ENCODE measurements at regions of chr19 and their contacts with region 1.

Region 1: GRCh38 chr19:46728693-46729676 is 12.1 kb upstream of the PRKD2 start:
- DNase-seq: peak; percentile 86 to 87 (median 86)
- ATAC-seq: peak; percentile 91
- H3K4me3 ChIP-seq: no peak overlapping the region
- H3K27ac ChIP-seq: no peak overlapping the region; the same call in 2 of the 3 replicates
- H3K4me1 ChIP-seq: peaks cover 26 to 72% of the 10 kb centered on the region in 2 experiments
- H3K27me3 ChIP-seq: no peaks in the 10 kb centered on the region
- CTCF ChIP-seq: peak; percentile 88 to 93 (median 93)
- EP300 ChIP-seq: no peak
- POLR2A ChIP-seq: no peak
- RAD21 ChIP-seq: peak; percentile 63 to 78

Region 2: GRCh38 chr19:46678110-46678732 is 50.8 kb before region 1 on chr19:
- CTCF ChIA-PET with region 1: no interaction called
- POLR2A ChIA-PET with region 1: no interaction called
- in situ Hi-C with region 1: no loop called
- intact Hi-C with region 1: no loop called
- DNase-seq: peak; percentile 86 to 99 (median 98)
- ATAC-seq: peak; percentile 100
- H3K4me3 ChIP-seq: no peak overlapping the region
- H3K27ac ChIP-seq: no peak overlapping the region
- H3K4me1 ChIP-seq: peaks cover 0 to 15% of the 10 kb centered on the region in 2 experiments; a peak in 3 of 5 replicates
- H3K27me3 ChIP-seq: no peaks in the 10 kb centered on the region
- CTCF ChIP-seq: no peak
- EP300 ChIP-seq: no peak
- POLR2A ChIP-seq: no peak
- RAD21 ChIP-seq: no peak

Region 3: DNA sequence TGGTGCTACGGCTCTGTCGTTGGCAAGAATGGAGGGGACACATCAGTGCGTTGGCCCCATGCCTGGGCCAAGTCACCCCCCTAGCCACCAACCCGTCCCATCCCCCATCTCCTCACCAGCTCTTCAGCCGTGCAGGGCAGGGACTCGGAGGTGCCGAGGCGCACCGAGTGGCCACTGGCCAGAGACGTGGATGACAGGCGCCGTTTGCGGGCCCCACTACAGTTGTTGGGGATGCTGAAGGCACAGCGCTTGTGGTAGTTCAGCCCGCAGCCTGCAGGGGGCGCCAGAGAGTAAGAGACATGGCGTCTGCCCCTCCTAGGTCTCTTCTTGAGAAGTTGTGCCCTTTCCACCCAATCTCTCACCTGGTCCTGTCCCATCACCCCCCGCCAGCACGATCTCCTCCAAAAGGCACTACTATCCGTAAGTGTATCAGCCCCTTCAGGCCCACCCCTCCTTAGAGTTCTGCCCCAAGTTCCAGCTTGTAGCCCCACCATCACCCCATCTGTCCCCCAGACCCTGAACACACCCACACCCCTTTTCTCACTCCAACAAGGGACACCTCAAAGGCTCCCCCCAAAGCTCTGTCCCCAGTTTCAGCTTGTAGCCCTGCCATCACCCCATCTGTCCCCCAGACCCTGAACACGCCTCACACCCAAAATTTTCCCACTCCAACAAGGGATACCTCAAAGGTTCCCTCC is 24.5 kb before region 1 on chr19:
- CTCF ChIA-PET with region 1: interaction called, 12 read pairs
- POLR2A ChIA-PET with region 1: interaction called, 3 read pairs
- in situ Hi-C with region 1: no loop called
- intact Hi-C with region 1: no loop called
- DNase-seq: peak; percentile 79 to 84 (median 82)
- ATAC-seq: peak; percentile 98
- H3K4me3 ChIP-seq: no peak overlapping the region
- H3K27ac ChIP-seq: no peak overlapping the region
- H3K4me1 ChIP-seq: peaks cover 0 to 6% of the 10 kb centered on the region in 2 experiments; a peak in 1 of 5 replicates
- H3K27me3 ChIP-seq: no peaks in the 10 kb centered on the region
- CTCF ChIP-seq: peak; percentile 88 to 91 (median 90)
- EP300 ChIP-seq: no peak
- POLR2A ChIP-seq: no peak
- RAD21 ChIP-seq: peak; percentile 48 to 76

Region 4: GRCh38 chr19:46713781-46714443 is 15.1 kb before region 1 on chr19:
- CTCF ChIA-PET with region 1: no interaction called
- POLR2A ChIA-PET with region 1: interaction called, 10 read pairs
- in situ Hi-C with region 1: no loop called
- intact Hi-C with region 1: no loop called
- DNase-seq: peak; percentile 90 to 94 (median 92)
- ATAC-seq: peak; percentile 74
- H3K4me3 ChIP-seq: peak overlapping the region; percentile 70
- H3K27ac ChIP-seq: peak overlapping the region; percentile 89
- H3K4me1 ChIP-seq: peaks cover 22 to 54% of the 10 kb centered on the region in 2 experiments
- H3K27me3 ChIP-seq: no peaks in the 10 kb centered on the region
- CTCF ChIP-seq: no peak
- EP300 ChIP-seq: no peak
- POLR2A ChIP-seq: peak; percentile 42; the same call in 1 of the 2 replicates
- RAD21 ChIP-seq: no peak

Region 5: DNA sequence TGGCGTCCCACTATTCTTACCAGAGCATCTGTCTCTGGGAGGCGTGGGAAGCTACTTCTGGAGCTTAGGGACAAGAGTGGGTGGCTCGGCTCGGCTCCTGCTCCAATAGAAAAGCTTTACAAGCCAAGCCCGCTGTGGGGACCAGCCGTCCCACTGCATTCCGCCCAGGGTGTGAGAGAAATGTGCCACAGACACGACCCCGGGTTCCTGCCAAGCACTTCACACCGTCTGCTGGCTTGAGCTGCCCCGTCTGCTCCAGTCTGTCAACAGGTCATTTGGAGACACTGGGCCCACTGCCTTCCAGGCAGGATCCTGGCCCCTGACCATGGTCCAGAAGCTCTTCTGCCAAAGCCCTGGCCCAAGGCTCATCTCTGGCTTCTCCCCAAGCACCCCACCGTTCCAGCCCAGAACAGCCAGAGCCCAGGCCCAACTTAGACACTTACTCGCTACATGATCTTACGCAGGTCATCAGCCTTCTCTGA is 10.3 kb after region 1 on chr19:
- CTCF ChIA-PET with region 1: no interaction called
- POLR2A ChIA-PET with region 1: interaction called, 12 read pairs
- in situ Hi-C with region 1: no loop called
- intact Hi-C with region 1: no loop called
- DNase-seq: no peak
- ATAC-seq: no peak
- H3K4me3 ChIP-seq: no peak overlapping the region
- H3K27ac ChIP-seq: no peak overlapping the region; the same call in 2 of the 3 replicates
- H3K4me1 ChIP-seq: peaks cover 31 to 49% of the 10 kb centered on the region in 2 experiments
- H3K27me3 ChIP-seq: no peaks in the 10 kb centered on the region
- CTCF ChIP-seq: no peak
- EP300 ChIP-seq: no peak
- POLR2A ChIP-seq: no peak
- RAD21 ChIP-seq: no peak

Measured in K562 (cell line).